IMR-90 (cell line): ENCODE measurements at regions of chr6 and their contacts with region 1.

Region 1: DNA sequence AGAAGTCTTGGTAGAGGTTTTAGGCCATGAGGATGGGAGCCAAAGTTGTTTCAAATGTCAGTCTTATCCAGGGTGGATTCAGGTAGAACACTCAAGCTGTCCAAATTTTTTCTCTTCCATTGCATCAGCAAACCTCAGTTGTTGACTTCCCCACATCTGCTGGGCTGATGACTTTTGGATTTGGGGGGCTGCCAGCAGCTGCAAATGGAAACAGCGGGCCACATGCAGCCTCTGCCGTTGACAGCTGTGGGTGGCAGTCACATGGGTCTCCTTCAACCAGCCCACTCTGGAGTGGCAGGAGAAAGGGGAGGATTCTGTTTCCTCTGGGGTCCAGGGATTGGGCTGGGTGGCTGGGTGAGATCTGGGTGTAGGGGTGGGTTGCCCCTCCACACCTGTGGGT is 5.8 kb upstream of the MLN start:
- DNase-seq: no peak
- ATAC-seq: no peak
- H3K4me3 ChIP-seq: no peak overlapping the region
- H3K27ac ChIP-seq: no peak overlapping the region
- H3K4me1 ChIP-seq: no peaks in the 10 kb centered on the region
- H3K27me3 ChIP-seq: peaks cover 62% of the 10 kb centered on the region
- CTCF ChIP-seq: no peak
- POLR2A ChIP-seq: no peak
- RAD21 ChIP-seq: no peak

Region 2: GRCh38 chr6:33904050-33904746 is 94.6 kb after region 1 on chr6:
- CTCF ChIA-PET with region 1: no interaction called
- POLR2A ChIA-PET with region 1: no interaction called
- dilution Hi-C with region 1: no loop called
- in situ Hi-C with region 1: no loop called
- intact Hi-C with region 1: loop called (anchors 10 kb)
- DNase-seq: no peak
- ATAC-seq: no peak
- H3K4me3 ChIP-seq: no peak overlapping the region
- H3K27ac ChIP-seq: no peak overlapping the region
- H3K4me1 ChIP-seq: no peaks in the 10 kb centered on the region
- H3K27me3 ChIP-seq: peaks cover 66% of the 10 kb centered on the region
- CTCF ChIP-seq: no peak
- POLR2A ChIP-seq: no peak
- RAD21 ChIP-seq: no peak